Endothelial cell of umbilical vein (primary cell): ENCODE measurements at regions of chr5 and their contacts with region 1.

Region 1: DNA sequence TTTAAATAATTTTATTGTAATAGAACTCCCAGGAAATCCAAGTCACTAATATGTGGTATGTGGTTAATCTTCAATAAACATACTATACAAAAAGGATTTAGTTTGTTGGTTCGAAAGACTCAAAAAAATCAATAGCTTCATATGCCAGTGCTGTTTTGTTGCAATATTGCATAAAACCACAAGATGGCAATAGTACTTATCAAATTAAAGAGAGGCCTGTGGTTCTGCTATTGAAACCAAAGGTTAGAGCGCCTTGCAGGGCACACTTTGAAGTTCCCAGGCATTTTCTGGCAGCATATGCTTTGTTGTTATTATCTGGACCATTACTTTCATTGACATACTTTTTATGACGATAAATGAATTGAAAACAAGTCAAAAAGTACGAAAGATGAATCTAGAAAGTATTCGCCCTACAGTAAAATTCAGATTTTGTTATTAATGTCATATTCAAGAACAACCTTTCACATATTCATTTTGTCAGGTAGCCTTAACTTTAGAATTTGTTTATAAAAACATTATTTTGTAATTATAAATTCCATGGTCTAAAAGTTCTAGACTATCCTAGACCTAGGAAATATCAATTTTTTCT is 316.3 kb downstream of the MCTP1 start:
- DNase-seq: peak; percentile 77
- H3K4me3 ChIP-seq: no peak overlapping the region
- H3K27ac ChIP-seq: no peak overlapping the region
- H3K4me1 ChIP-seq: peaks cover 7% of the 10 kb centered on the region
- H3K27me3 ChIP-seq: no peaks in the 10 kb centered on the region
- CTCF ChIP-seq: peak; percentile 44 to 54
- POLR2A ChIP-seq: no peak

Region 2: DNA sequence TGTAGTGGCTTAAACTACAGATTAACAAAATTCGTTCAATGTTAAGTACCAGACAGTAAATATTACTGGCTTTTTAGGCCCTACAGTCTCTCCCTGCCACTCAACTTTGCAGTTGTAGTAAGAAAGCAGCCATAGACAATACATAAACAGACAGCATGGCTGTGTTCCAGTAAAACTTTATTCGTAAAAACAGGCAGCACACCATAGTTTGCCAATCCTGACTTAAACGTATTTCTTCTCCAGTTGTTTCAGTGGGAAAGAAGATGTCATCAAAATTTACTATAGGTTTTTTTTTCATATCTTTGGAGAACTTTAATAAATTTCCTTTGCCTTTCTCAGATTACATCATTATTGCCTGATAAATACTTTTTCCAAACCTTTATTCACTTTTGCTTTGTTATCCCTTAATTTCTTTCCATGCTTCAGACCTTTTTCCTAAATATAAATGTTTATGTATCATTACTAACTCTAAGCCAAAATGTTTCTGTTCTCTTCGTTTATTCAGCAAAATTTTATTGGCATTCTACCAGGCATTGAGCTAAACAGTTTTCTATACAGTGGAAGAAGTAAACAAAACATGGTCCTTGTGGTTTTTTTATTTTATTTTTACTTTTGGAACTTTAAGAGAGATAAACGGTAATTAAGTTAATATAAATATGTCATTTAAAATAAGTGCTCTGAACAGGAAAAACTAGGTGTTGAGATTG is 285.6 kb before region 1 on chr5:
- CTCF ChIA-PET with region 1: no interaction called
- POLR2A ChIA-PET with region 1: no interaction called
- dilution Hi-C with region 1: no loop called
- intact Hi-C with region 1: no loop called
- DNase-seq: no peak
- H3K4me3 ChIP-seq: no peak overlapping the region
- H3K27ac ChIP-seq: no peak overlapping the region
- H3K4me1 ChIP-seq: no peaks in the 10 kb centered on the region
- H3K27me3 ChIP-seq: no peaks in the 10 kb centered on the region
- CTCF ChIP-seq: no peak
- POLR2A ChIP-seq: no peak

Region 3: DNA sequence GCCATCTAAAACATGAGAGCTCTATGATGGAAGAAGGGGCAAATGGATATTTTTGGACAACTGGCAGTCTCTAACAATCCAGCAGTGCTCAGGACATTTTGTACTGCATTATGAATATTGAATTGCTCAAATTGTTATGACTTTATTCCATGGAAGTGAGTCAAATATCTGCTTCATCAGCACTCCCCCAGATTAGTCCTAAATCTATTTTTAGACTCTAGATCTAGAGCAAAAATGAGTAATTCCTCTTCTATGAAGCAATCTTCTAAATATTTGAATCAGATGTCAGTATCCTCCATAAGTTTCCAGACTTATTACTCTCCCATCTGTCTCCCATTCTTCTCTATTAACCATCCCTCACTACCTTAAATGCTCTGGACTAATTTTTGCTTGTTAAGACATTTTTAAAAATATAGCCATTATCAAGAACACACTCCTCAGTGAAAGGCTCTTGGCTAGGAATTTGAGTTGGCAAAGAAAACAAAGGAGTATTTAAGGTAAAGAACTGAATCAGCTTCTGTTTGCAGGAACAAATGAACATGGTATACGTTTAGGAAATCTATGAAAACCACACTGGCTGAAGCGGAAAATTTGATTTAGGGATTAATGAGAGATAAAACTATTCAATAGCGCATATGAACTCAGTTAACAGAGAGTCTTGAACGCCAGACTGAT is 15.4 kb after region 1 on chr5:
- CTCF ChIA-PET with region 1: interaction called, 16 read pairs
- POLR2A ChIA-PET with region 1: no interaction called
- dilution Hi-C with region 1: no loop called
- intact Hi-C with region 1: no loop called
- DNase-seq: no peak
- H3K4me3 ChIP-seq: no peak overlapping the region
- H3K27ac ChIP-seq: no peak overlapping the region
- H3K4me1 ChIP-seq: peaks cover 3% of the 10 kb centered on the region
- H3K27me3 ChIP-seq: no peaks in the 10 kb centered on the region
- CTCF ChIP-seq: no peak
- POLR2A ChIP-seq: no peak

Region 4: GRCh38 chr5:95081500-95081960 is 112.9 kb after region 1 on chr5:
- CTCF ChIA-PET with region 1: interaction called, 29 read pairs
- POLR2A ChIA-PET with region 1: no interaction called
- dilution Hi-C with region 1: no loop called
- intact Hi-C with region 1: loop called (anchors 2 kb)
- DNase-seq: peak; percentile 93
- H3K4me3 ChIP-seq: peak overlapping the region; percentile 66 to 100 (median 80)
- H3K27ac ChIP-seq: peak overlapping the region; percentile 69
- H3K4me1 ChIP-seq: peaks cover 45% of the 10 kb centered on the region
- H3K27me3 ChIP-seq: no peaks in the 10 kb centered on the region
- CTCF ChIP-seq: no peak
- POLR2A ChIP-seq: peak; percentile 98

Region 5: GRCh38 chr5:95178046-95178651 is 209.5 kb after region 1 on chr5:
- CTCF ChIA-PET with region 1: interaction called, 56 read pairs
- POLR2A ChIA-PET with region 1: no interaction called
- dilution Hi-C with region 1: no loop called
- intact Hi-C with region 1: loop called (anchors 1 kb)
- DNase-seq: peak; percentile 91
- H3K4me3 ChIP-seq: no peak overlapping the region
- H3K27ac ChIP-seq: peak overlapping the region; percentile 28
- H3K4me1 ChIP-seq: peaks cover 5% of the 10 kb centered on the region
- H3K27me3 ChIP-seq: no peaks in the 10 kb centered on the region
- CTCF ChIP-seq: peak; percentile 53 to 70
- POLR2A ChIP-seq: no peak

Region 6: GRCh38 chr5:95238560-95239325 is 270.1 kb after region 1 on chr5:
- CTCF ChIA-PET with region 1: interaction called, 75 read pairs
- POLR2A ChIA-PET with region 1: no interaction called
- dilution Hi-C with region 1: no loop called
- intact Hi-C with region 1: loop called (anchors 1 kb)
- DNase-seq: peak; percentile 68
- H3K4me3 ChIP-seq: no peak overlapping the region
- H3K27ac ChIP-seq: peak overlapping the region; percentile 82
- H3K4me1 ChIP-seq: peaks cover 32% of the 10 kb centered on the region
- H3K27me3 ChIP-seq: no peaks in the 10 kb centered on the region
- CTCF ChIP-seq: peak; percentile 11 to 30
- POLR2A ChIP-seq: no peak

Region 7: DNA sequence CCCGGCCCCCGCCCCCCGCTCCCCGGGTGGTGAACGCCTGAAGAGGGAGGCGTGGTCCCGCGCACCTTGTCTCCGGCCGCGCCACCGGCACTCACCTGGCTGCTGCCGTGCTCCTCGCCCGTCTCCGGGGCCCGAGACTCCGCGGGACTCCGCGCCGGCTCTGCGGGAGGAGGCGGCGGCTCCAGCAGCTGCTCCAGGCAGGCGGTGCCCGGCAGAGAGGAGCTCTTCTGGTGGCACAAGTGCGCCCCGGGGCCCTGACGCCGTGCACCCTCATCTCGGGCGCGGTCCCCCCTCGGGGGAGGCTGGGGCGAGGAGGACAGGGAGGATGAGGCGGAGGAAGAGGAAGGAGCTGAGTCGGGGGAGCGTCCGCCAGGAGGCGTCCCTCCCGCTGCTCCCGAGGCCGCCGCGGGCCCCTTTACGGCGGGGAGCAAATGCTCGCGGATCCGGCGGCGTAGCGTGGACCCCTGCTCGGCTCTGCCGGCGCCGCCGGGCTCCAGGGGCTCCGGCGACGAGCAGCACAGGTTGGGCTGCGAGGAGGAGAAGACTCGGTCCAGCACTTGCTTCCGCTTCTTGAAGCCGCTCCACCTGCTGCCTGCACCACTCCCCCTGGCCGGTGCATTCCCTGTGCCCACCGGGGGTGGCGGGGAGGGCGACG is 315.3 kb after region 1 on chr5:
- CTCF ChIA-PET with region 1: interaction called, 49 read pairs
- POLR2A ChIA-PET with region 1: no interaction called
- dilution Hi-C with region 1: no loop called
- intact Hi-C with region 1: no loop called
- DNase-seq: peak; percentile 28
- H3K4me3 ChIP-seq: peak overlapping the region; percentile 27 to 55 (median 44)
- H3K27ac ChIP-seq: no peak overlapping the region
- H3K4me1 ChIP-seq: peaks cover 14% of the 10 kb centered on the region
- H3K27me3 ChIP-seq: peaks cover 50 to 77% of the 10 kb centered on the region in 2 experiments
- CTCF ChIP-seq: peak; percentile 38 to 58
- POLR2A ChIP-seq: no peak